ENCODE measurements at regions of chr22 and their contacts with region 1.

Region 1: GRCh38 chr22:40589396-40589795 is 47.1 kb downstream of the MRTFA start:
- DNase-seq: no peak
- H3K4me3 ChIP-seq: no peak overlapping the region
- H3K27ac ChIP-seq: no peak overlapping the region
- H3K27me3 ChIP-seq: no peaks in the 10 kb centered on the region
- CTCF ChIP-seq: no peak

Region 2: DNA sequence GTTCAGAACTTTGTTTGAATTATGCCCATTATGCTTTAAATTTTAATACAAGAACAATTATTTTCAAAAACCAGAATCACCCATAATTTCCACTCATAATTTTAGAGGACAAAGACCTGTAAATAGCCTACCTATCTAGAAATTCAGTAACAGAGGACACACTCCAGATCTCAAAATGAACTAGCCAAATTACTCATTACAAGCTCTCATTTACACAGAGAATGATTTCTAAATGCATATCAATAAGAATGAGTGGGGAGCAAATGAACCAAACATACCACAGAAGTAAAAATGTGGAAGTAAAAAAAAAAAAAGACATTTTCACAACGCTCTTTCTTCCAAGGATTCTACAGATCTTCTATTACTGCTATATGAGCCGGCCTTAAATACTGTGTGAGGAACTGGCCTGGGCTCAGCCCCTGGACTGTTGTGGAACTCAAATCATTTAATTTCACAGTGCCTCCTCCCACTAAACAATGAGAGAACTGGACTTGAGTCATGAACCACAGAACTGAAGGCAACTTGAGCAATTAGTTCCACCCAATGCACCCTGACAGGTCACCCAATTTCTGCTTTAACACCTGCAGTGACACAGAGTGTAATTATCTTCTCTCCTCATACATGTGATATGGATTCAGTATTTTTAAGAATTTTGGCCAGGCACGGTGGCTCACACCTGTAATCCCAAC is 39.1 kb after region 1 on chr22:
- CTCF ChIA-PET with region 1: no interaction called
- POLR2A ChIA-PET with region 1: interaction called, 10 read pairs
- DNase-seq: no peak
- H3K4me3 ChIP-seq: no peak overlapping the region
- H3K27ac ChIP-seq: no peak overlapping the region
- H3K27me3 ChIP-seq: no peaks in the 10 kb centered on the region
- CTCF ChIP-seq: no peak